ENCODE measurements at regions of chr2 and their contacts with region 1.

Region 1: DNA sequence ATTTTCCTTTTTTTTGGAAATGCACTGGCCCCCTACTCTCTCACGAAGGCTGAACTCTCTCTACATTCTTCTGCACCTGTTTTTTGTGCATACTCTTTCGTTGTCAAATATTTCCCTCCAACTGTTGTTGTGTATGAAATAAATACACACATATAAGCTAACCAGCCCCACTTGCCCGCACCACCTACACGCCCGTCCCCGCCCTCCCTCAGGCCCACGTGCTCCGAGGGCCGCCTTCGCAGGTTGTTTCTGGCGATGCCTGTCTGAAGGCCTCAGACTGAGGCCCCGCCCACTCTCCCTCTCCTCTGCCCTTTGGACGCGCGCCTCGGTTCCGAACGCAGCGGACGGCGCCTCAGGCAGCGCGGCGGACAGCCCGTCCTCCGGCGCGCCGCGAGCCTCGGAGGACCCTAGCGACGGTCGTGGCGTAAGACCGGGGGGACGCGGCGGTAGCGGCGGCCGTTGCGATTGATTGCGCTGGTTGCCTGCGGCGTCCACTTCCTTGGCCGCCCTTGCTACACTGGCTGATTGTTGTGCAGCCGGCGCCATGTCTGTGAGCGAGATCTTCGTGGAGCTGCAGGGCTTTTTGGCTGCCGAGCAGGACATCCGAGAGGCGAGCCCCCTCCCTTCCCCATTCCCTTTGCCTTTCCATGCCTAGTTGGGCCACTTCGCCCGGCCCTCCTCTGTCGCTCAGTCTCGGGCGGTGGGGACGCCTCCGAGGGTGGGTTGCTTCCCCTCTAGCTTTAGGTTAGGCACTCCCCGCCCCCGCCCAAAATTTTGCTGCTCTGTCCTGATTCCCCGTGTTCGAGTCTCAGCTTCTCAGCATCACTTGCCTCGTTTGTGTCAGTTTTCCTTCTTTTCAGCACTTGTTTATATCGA is at the start of gene TSN:
- DNase-seq: peak; percentile 98 to 99 (median 99)
- H3K4me3 ChIP-seq: peak within 1 kb of the TSS; percentile 89 to 100 (median 96)
- H3K27ac ChIP-seq: peak within 1 kb of the TSS; percentile 85 to 94
- H3K4me1 ChIP-seq: peaks cover 13 to 24% (median 16%) of the 10 kb centered on the region in 4 experiments
- H3K27me3 ChIP-seq: no peaks in the 10 kb centered on the region

Region 2: GRCh38 chr2:121736462-121737341 is 18.8 kb before region 1 on chr2 and contains the start of gene NIFK:
- CTCF ChIA-PET with region 1: interaction called, 10 read pairs
- POLR2A ChIA-PET with region 1: interaction called, 3 read pairs
- DNase-seq: peak; percentile 98 to 99 (median 99)
- H3K4me3 ChIP-seq: peak within 1 kb of the TSS; percentile 86 to 100 (median 95)
- H3K27ac ChIP-seq: peak within 1 kb of the TSS; percentile 65 to 91
- H3K4me1 ChIP-seq: peaks cover 6 to 29% (median 19%) of the 10 kb centered on the region in 4 experiments
- H3K27me3 ChIP-seq: no peaks in the 10 kb centered on the region

Region 3: DNA sequence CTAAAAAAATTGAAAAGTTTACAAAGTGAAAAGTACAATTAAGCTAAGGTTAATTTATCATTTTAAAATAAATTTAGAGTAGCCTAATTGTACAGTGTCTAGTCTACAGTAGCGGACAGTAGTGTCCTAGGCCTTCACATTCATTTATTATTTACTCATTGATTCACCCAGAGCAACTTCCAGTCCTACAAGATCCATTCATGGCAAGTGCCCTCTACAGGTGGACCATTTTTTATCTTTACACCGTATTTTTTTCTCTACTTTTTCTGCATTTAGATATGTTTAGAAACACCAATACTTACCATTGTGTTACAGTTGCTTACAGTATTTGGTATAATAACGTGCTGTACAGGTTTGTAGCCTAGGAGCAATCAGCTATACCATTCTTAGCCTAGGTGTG is 84.1 kb after region 1 on chr2:
- CTCF ChIA-PET with region 1: no interaction called
- POLR2A ChIA-PET with region 1: no interaction called
- DNase-seq: no peak
- H3K4me3 ChIP-seq: no peak overlapping the region
- H3K27ac ChIP-seq: no peak overlapping the region
- H3K4me1 ChIP-seq: no peaks in the 10 kb centered on the region
- H3K27me3 ChIP-seq: peaks cover 0 to 2% (median 0%) of the 10 kb centered on the region in 5 experiments